Activated naive CD4-positive, alpha-beta T cell treated with anti-CD3 and anti-CD28 coated beads for 36 hours (primary cell): ENCODE measurements at regions of chr3 and their contacts with region 1.

Region 1: GRCh38 chr3:170414202-170414663 is 4.4 kb upstream of the CLDN11 start:
- DNase-seq: peak; percentile 59
- H3K4me3 Mint-ChIP-seq: no peak overlapping the region
- H3K27ac Mint-ChIP-seq: no peak overlapping the region
- H3K4me1 Mint-ChIP-seq: peaks cover 6% of the 10 kb centered on the region
- H3K27me3 Mint-ChIP-seq: peaks cover 16% of the 10 kb centered on the region

Region 2: DNA sequence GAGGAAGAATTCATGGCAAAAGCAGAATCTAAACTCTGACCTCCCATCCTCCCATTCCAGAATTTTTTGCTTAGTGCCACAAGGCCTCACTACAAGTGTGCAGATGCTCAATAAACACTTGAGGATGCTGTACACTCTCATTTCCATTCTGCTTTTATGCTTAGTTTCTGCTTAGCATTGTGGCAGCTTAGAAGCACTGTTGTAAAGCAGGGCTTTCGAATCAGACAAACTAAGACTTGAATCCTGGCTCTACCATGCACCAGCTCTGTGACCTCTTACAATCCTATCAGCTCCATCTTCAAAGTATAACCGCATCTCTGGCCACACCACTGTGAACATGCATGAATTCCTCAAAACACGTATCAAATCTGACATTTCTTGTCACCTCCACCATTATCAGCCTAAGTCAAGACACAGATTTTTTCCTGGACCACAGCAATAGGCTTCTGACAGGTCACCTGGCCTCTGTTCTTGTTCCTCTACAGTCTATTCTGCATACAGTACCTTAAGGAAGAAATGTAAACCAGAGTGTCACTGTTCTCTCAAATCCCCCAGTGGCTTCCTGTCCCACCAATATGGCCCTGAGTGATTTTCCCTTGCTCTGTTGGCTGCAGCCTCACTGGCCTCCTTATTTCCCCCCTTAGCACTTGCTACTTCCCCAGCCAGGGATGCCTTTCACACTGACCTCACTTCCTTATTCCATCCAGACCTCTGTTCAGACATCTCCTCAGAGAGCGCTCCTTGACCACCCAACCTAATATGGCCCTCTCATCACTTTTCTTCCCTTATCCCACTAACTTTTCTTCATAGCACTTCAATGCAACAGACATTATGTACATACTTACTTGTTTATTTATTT is 224.6 kb before region 1 on chr3:
- CTCF ChIA-PET with region 1: interaction called, 6 read pairs
- intact Hi-C with region 1: loop called (anchors 1 kb)
- DNase-seq: no peak
- H3K4me3 Mint-ChIP-seq: no peak overlapping the region
- H3K27ac Mint-ChIP-seq: no peak overlapping the region
- H3K4me1 Mint-ChIP-seq: peaks cover 11% of the 10 kb centered on the region
- H3K27me3 Mint-ChIP-seq: peaks cover 5% of the 10 kb centered on the region

Region 3: DNA sequence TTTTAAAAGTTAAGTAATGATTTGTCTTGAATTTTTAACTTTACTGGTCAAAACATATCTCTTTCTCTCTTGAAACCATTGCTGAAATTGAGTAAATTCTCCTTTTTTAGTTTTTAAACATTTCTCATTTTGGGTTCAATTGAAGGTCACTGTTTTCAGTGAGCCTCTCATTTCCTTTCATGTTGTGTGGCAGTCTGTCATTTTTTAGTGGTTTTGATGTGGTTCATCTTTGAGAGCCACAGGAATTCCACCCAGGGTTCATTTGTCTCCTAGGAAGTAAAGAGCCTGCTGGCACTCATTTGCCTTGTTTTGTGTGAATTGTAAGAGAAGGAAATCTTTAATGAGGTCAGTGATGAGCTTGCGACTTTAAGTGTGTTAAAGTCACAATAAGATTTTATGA is 14.8 kb after region 1 on chr3:
- CTCF ChIA-PET with region 1: interaction called, 18 read pairs
- intact Hi-C with region 1: no loop called
- DNase-seq: no peak
- H3K4me3 Mint-ChIP-seq: no peak overlapping the region
- H3K27ac Mint-ChIP-seq: no peak overlapping the region
- H3K4me1 Mint-ChIP-seq: peaks cover 18% of the 10 kb centered on the region
- H3K27me3 Mint-ChIP-seq: peaks cover 2% of the 10 kb centered on the region

Region 4: GRCh38 chr3:170689893-170690660 is 275.8 kb after region 1 on chr3:
- CTCF ChIA-PET with region 1: interaction called, 4 read pairs
- intact Hi-C with region 1: loop called (anchors 1 kb)
- DNase-seq: peak; percentile 59
- H3K4me3 Mint-ChIP-seq: no peak overlapping the region
- H3K27ac Mint-ChIP-seq: no peak overlapping the region
- H3K4me1 Mint-ChIP-seq: peaks cover 3% of the 10 kb centered on the region
- H3K27me3 Mint-ChIP-seq: no peaks in the 10 kb centered on the region

Region 5: GRCh38 chr3:170848292-170848917 is 434.2 kb after region 1 on chr3:
- CTCF ChIA-PET with region 1: interaction called, 8 read pairs
- intact Hi-C with region 1: loop called (anchors 1 kb)
- DNase-seq: no peak
- H3K4me3 Mint-ChIP-seq: no peak overlapping the region
- H3K27ac Mint-ChIP-seq: no peak overlapping the region
- H3K4me1 Mint-ChIP-seq: peaks cover 5% of the 10 kb centered on the region
- H3K27me3 Mint-ChIP-seq: peaks cover 10% of the 10 kb centered on the region